SK-N-SH (cell line): ENCODE measurements at regions of chr12 and their contacts with region 1.

Region 1: DNA sequence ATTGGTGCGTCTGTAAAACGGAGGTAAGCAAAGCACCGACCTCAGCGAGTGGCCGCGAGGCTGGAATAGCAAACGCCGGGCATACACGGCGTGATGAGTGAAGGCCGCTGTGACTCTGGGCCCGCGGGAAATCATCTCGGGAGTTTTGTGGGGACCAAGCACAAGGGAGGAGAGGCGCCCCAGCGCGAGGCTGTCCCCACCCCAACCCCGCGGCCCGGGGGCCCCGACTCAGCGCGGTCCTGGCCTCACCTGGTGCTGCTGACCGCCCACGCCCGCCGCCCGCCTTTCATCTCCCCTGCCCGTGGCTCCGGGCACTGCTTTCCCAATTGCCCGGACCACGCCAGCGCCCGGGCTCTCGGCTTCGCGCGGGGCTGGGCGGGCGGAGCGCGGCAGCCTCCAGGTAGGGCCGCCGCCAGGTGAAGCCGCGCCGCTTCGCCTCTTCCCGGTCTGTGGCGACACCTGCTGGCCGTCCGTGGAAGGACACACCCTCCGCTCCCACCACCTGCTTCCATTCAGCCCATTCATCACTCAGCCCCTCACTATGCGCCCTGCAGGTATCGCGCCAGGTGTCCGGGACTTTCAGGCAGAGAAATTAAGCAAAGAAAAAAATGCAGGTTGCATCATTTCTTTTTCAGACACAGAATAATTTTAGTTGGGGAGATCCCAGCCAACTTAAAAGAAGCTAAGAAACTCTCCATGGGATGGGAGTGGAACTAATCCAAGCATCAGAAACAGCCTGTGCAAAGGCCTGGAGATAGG is 360.4 kb downstream of the MED13L start:
- DNase-seq: peak; percentile 86
- H3K4me3 ChIP-seq: peak overlapping the region; percentile 20 to 31; a peak in 2 of 4 replicates
- H3K27ac ChIP-seq: no peak overlapping the region
- H3K4me1 ChIP-seq: peaks cover 0 to 3% of the 10 kb centered on the region in 2 experiments; a peak in 1 of 4 replicates
- H3K27me3 ChIP-seq: no peaks in the 10 kb centered on the region; the same call in 1 of the 2 replicates
- CTCF ChIP-seq: peak; percentile 84
- EP300 ChIP-seq: no peak
- RAD21 ChIP-seq: peak; percentile 87

Region 2: DNA sequence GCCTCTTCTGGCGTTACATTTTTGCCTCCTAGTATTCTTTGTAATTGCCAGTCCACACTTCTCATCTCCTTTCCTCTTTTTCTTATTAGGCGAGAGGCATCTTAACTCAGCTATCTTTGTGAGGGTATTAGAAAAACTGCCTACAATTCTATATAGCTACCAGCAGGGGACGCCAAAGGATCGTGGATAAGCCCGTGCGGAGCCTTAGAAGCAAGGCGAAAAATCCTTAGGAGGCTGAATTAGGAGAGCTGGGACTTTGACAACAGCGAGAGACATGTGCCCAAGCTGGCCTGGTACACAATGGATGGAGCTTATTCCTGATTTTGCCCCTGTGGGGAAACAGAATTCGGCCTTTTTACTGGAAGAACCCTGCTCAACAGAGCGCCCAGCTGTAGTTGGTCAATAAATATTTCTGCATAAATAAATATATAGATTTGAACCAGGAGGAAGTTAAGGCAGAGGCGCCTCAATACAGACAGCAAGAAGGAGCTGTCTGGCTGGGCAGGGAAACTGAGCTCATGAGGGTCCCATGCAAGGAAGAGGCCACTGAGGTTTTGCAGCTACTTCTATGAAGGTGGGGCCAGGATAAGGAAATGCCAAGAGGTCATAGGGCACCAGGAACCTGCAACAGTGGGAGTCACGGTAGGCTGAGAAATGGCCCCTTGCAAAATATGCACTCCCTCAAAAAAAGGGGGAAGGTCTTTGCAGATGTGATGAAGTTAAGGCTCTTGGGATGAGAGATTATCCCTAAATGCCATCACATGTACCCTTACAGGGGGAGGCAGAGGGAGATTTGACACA is 1936.4 kb before region 1 on chr12:
- CTCF ChIA-PET with region 1: interaction called, 10 read pairs
- POLR2A ChIA-PET with region 1: no interaction called
- DNase-seq: peak; percentile 57
- H3K4me3 ChIP-seq: peak overlapping the region in 1 of 2 experiments; percentile 20; a peak in 1 of 4 replicates
- H3K27ac ChIP-seq: no peak overlapping the region
- H3K4me1 ChIP-seq: no peaks in the 10 kb centered on the region
- H3K27me3 ChIP-seq: peaks cover 26% of the 10 kb centered on the region; the same call in 1 of the 2 replicates
- CTCF ChIP-seq: peak; percentile 97
- EP300 ChIP-seq: no peak
- RAD21 ChIP-seq: peak; percentile 96

Region 3: GRCh38 chr12:114636723-114637483 is 1280.2 kb before region 1 on chr12:
- CTCF ChIA-PET with region 1: interaction called, 10 read pairs
- POLR2A ChIA-PET with region 1: no interaction called
- DNase-seq: peak; percentile 56
- H3K4me3 ChIP-seq: no peak overlapping the region
- H3K27ac ChIP-seq: no peak overlapping the region
- H3K4me1 ChIP-seq: no peaks in the 10 kb centered on the region
- H3K27me3 ChIP-seq: no peaks in the 10 kb centered on the region
- CTCF ChIP-seq: peak; percentile 40
- EP300 ChIP-seq: no peak
- RAD21 ChIP-seq: peak; percentile 40

Region 4: GRCh38 chr12:114662512-114663177 is 1254.4 kb before region 1 on chr12:
- CTCF ChIA-PET with region 1: interaction called, 45 read pairs
- POLR2A ChIA-PET with region 1: no interaction called
- DNase-seq: peak; percentile 73
- H3K4me3 ChIP-seq: no peak overlapping the region
- H3K27ac ChIP-seq: no peak overlapping the region
- H3K4me1 ChIP-seq: no peaks in the 10 kb centered on the region
- H3K27me3 ChIP-seq: no peaks in the 10 kb centered on the region
- CTCF ChIP-seq: peak; percentile 94
- EP300 ChIP-seq: peak; percentile 32 to 47; a peak in 1 of 4 replicates
- RAD21 ChIP-seq: peak; percentile 96

Region 5: DNA sequence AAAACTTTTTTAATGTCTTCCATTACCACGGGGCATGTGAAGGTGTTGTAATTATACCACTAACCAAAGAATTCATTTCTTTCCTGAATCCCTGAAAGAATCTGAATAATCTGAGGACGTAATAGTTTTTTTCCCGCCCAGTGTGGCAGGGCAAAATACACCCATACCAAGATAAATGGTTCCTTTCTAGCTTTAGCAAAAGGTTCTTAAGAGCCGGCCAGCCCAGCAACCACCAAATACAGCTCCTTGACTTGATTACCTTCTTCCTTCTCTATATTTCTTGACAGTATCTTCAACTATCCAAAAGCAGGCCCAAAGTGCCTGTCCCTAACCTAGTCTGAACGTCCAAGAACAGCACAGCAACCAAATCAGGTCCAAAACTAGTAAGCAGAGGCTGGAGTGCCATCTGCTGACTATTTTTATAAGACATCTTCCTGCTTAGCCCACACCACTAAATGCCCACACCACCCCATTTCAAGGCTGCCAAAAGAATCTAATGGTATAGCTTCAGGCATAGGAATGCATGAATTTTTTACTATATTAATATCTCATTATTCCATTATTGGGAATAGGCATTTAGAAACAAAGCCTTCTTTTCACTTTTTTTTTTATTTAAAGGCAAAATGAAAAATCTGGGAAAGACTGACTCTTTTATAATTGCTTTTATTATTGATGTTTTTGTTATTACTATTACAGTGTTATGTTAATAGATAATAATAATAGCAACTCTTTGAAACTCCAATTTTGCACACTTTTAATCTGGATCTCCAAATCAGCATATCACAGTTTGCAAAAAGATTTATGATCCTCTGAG is 164.0 kb before region 1 on chr12:
- CTCF ChIA-PET with region 1: interaction called, 15 read pairs
- POLR2A ChIA-PET with region 1: no interaction called
- DNase-seq: peak; percentile 55
- H3K4me3 ChIP-seq: no peak overlapping the region; a peak in 1 of 4 replicates
- H3K27ac ChIP-seq: peak overlapping the region in 1 of 2 experiments; percentile 43; a peak in 1 of 4 replicates
- H3K4me1 ChIP-seq: peaks cover 0 to 8% of the 10 kb centered on the region in 2 experiments; a peak in 1 of 4 replicates
- H3K27me3 ChIP-seq: no peaks in the 10 kb centered on the region; the same call in none of the 2 replicates
- CTCF ChIP-seq: peak; percentile 74
- EP300 ChIP-seq: no peak
- RAD21 ChIP-seq: peak; percentile 96

Region 6: DNA sequence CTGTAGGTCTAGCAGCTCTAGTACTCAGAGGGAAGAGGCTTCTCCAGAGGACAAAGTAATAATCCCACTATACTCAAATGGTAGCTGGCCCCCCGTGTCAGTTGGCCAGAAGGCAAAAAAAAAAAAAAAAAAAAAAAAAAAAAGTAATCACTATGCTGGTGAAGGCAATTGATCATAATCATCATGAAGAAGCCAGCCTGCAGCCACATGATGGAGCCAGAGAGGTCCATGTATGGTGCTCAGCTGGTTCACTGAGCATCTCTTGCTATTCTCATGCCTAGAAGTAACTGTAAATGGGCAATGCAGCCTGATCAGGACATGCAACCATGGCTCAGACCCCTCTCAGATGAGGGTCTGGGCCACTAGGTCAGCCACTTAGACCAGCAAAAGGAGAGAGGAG is 18.4 kb before region 1 on chr12:
- CTCF ChIA-PET with region 1: interaction called, 13 read pairs
- POLR2A ChIA-PET with region 1: no interaction called
- DNase-seq: no peak
- H3K4me3 ChIP-seq: no peak overlapping the region
- H3K27ac ChIP-seq: no peak overlapping the region
- H3K4me1 ChIP-seq: no peaks in the 10 kb centered on the region
- H3K27me3 ChIP-seq: no peaks in the 10 kb centered on the region; the same call in 1 of the 2 replicates
- CTCF ChIP-seq: no peak
- EP300 ChIP-seq: no peak
- RAD21 ChIP-seq: no peak